Posterior vena cava (tissue), 2 donors: ENCODE measurements at regions of chr1 and their contacts with region 1.

Region 1: GRCh38 chr1:55305735-55306134 is 90.6 kb upstream of the USP24 start:
- DNase-seq: no peak

Region 2: GRCh38 chr1:55239548-55239947 is 66.2 kb before region 1 on chr1:
- intact Hi-C with region 1: loop called in 1 of 2 experiments (anchors 2 kb)
- DNase-seq: no peak

Region 3: GRCh38 chr1:55658917-55659316 is 353.2 kb after region 1 on chr1:
- intact Hi-C with region 1: no loop called
- DNase-seq: no peak